Activated naive CD4-positive, alpha-beta T cell treated with anti-CD3 and anti-CD28 coated beads for 36 hours (primary cell): ENCODE measurements at regions of chr2 and their contacts with region 1.

Region 1: DNA sequence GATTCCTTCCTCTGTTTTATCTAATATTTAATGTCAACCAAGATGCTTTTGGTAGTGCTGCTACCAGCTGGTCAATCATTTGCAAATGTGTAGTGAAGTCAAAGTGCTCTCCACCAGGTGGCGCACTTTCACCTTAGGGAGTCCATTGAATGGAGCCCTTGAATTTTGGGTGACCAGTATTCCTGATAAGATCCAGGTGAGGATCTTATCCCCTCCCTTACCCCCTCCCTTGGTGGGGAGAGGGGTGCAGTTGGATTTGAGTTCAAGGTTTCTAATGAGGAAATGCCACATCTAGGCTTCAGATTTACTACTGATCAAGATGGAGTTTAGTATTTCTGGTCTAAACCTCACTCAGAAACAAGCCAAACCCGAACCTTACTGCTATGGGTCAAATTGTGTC is 12.0 kb upstream of the E2F6 start:
- DNase-seq: peak; percentile 94
- H3K4me3 Mint-ChIP-seq: no peak overlapping the region
- H3K27ac Mint-ChIP-seq: no peak overlapping the region
- H3K4me1 Mint-ChIP-seq: peaks cover 1% of the 10 kb centered on the region
- H3K27me3 Mint-ChIP-seq: peaks cover 27% of the 10 kb centered on the region

Region 2: DNA sequence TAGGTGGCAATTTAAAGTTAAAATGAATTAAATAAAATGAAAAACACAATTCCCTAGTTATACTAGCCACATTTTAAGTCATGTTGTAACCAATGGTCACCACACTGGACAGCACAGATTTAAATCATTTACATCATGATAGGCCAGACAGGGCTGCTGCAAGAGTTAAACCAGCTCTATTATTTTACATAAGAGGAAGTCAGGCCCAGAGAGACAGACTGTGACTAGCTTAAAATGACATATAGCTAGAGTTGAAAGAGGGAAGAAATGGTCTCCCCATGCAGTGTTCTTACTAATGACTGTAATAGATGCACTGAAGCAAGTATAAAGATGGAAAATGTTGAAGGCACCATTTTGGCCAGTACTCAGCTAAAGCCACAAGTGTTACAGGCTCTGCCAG is 253.1 kb before region 1 on chr2:
- CTCF ChIA-PET with region 1: interaction called, 10 read pairs
- intact Hi-C with region 1: no loop called
- DNase-seq: no peak
- H3K4me3 Mint-ChIP-seq: no peak overlapping the region
- H3K27ac Mint-ChIP-seq: no peak overlapping the region
- H3K4me1 Mint-ChIP-seq: no peaks in the 10 kb centered on the region
- H3K27me3 Mint-ChIP-seq: no peaks in the 10 kb centered on the region

Region 3: DNA sequence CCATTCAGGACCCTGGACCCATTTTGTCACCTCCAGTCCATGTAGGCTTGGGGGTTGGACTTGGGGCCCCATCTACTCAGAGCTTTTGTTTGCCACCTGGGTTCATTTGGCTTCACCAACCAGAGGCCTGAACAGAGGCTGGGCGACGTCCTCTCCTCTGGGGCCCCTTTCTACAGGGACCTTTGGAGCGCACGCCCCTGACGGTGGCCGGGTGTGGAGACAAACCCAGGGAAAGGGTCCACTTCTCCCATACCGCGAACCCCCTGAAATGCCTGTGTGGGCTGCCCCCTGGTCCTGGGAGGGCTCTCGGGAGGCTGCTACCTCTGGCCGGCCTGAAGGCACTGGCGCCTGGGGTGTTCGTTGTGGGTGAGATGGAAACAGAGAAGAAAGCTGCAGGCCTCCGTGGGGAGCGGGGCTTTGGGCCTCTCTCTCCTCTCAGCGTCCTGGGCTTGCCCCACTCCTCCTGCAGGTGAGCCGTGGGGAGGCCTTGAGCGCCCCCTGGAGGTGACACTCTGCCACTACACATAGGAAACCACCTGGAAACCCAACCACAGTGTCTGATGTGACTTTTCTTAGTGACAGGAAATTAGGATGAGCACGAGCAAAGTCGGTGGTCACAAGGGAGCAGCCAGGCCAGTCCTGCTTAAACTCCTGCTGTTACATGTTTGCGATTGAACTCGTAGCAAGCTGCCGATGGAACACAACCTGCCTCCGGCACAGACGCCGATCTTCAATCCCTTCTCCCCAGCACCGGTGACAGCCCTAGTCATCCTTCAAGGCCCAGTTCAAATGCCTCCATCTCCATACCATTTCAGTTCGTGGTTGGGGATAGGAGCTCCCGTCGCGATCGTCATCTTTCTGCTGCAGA is 204.0 kb after region 1 on chr2:
- CTCF ChIA-PET with region 1: interaction called, 5 read pairs
- intact Hi-C with region 1: loop called (anchors 1 kb)
- DNase-seq: peak; percentile 80
- H3K4me3 Mint-ChIP-seq: no peak overlapping the region
- H3K27ac Mint-ChIP-seq: no peak overlapping the region
- H3K4me1 Mint-ChIP-seq: peaks cover 3% of the 10 kb centered on the region
- H3K27me3 Mint-ChIP-seq: peaks cover 2% of the 10 kb centered on the region